PC-9 (cell line): ENCODE measurements at regions of chr6 and their contacts with region 1.

Region 1: GRCh38 chr6:150891888-150892485 is 26.5 kb downstream of the MTHFD1L start:
- DNase-seq: peak; percentile 58 to 62
- H3K4me3 ChIP-seq: no peak overlapping the region
- H3K27ac ChIP-seq: no peak overlapping the region
- H3K4me1 ChIP-seq: peaks cover 23% of the 10 kb centered on the region
- H3K27me3 ChIP-seq: no peaks in the 10 kb centered on the region
- CTCF ChIP-seq: peak; percentile 86

Region 2: GRCh38 chr6:150822932-150823331 is 69.1 kb before region 1 on chr6:
- CTCF ChIA-PET with region 1: interaction called, 14 read pairs
- POLR2A ChIA-PET with region 1: no interaction called
- intact Hi-C with region 1: no loop called
- DNase-seq: no peak
- H3K4me3 ChIP-seq: no peak overlapping the region
- H3K27ac ChIP-seq: no peak overlapping the region
- H3K4me1 ChIP-seq: no peaks in the 10 kb centered on the region
- H3K27me3 ChIP-seq: no peaks in the 10 kb centered on the region
- CTCF ChIP-seq: no peak

Region 3: GRCh38 chr6:151014404-151015100 is 122.6 kb after region 1 on chr6:
- CTCF ChIA-PET with region 1: no interaction called
- POLR2A ChIA-PET with region 1: interaction called, 4 read pairs
- intact Hi-C with region 1: loop called (anchors 5 kb)
- DNase-seq: peak; percentile 56 to 60
- H3K4me3 ChIP-seq: no peak overlapping the region
- H3K27ac ChIP-seq: no peak overlapping the region
- H3K4me1 ChIP-seq: peaks cover 6% of the 10 kb centered on the region; the same call in 1 of the 2 replicates
- H3K27me3 ChIP-seq: no peaks in the 10 kb centered on the region
- CTCF ChIP-seq: peak; percentile 97

Region 4: GRCh38 chr6:151330134-151330696 is 438.2 kb after region 1 on chr6:
- CTCF ChIA-PET with region 1: interaction called, 16 read pairs
- POLR2A ChIA-PET with region 1: no interaction called
- intact Hi-C with region 1: loop called (anchors 1 kb)
- DNase-seq: no peak
- H3K4me3 ChIP-seq: no peak overlapping the region
- H3K27ac ChIP-seq: no peak overlapping the region
- H3K4me1 ChIP-seq: peaks cover 12% of the 10 kb centered on the region
- H3K27me3 ChIP-seq: no peaks in the 10 kb centered on the region
- CTCF ChIP-seq: no peak

Region 5: GRCh38 chr6:151339369-151339768 is 447.4 kb after region 1 on chr6:
- CTCF ChIA-PET with region 1: interaction called, 16 read pairs
- POLR2A ChIA-PET with region 1: no interaction called
- intact Hi-C with region 1: loop called (anchors 1 kb)
- DNase-seq: no peak
- H3K4me3 ChIP-seq: no peak overlapping the region
- H3K27ac ChIP-seq: no peak overlapping the region
- H3K4me1 ChIP-seq: no peaks in the 10 kb centered on the region
- H3K27me3 ChIP-seq: no peaks in the 10 kb centered on the region
- CTCF ChIP-seq: no peak

Region 6: GRCh38 chr6:152310371-152310954 is 1418.5 kb after region 1 on chr6:
- CTCF ChIA-PET with region 1: no interaction called
- POLR2A ChIA-PET with region 1: interaction called, 11 read pairs
- intact Hi-C with region 1: no loop called
- DNase-seq: no peak
- H3K4me3 ChIP-seq: no peak overlapping the region
- H3K27ac ChIP-seq: no peak overlapping the region
- H3K4me1 ChIP-seq: no peaks in the 10 kb centered on the region
- H3K27me3 ChIP-seq: no peaks in the 10 kb centered on the region
- CTCF ChIP-seq: no peak

Region 7: GRCh38 chr6:152399399-152399798 is 1507.4 kb after region 1 on chr6:
- CTCF ChIA-PET with region 1: no interaction called
- POLR2A ChIA-PET with region 1: no interaction called
- intact Hi-C with region 1: no loop called
- DNase-seq: no peak
- H3K4me3 ChIP-seq: no peak overlapping the region
- H3K27ac ChIP-seq: no peak overlapping the region
- H3K4me1 ChIP-seq: peaks cover 18% of the 10 kb centered on the region
- H3K27me3 ChIP-seq: no peaks in the 10 kb centered on the region
- CTCF ChIP-seq: no peak